ENCODE measurements at regions of chr6 and their contacts with region 1.

Region 1: GRCh38 chr6:31546962-31547726 is at the start of gene NFKBIL1:
- DNase-seq: peak; percentile 94 to 98 (median 98)
- ATAC-seq: peak; percentile 96 to 98 (median 97)
- H3K4me3 ChIP-seq: peak within 1 kb of the TSS; percentile 4 to 64 (median 56)
- H3K27ac ChIP-seq: peak within 1 kb of the TSS; percentile 63 to 95 (median 89)
- H3K4me1 ChIP-seq: peaks cover 0 to 37% (median 22%) of the 10 kb centered on the region in 12 donors
- H3K27me3 ChIP-seq: no peaks in the 10 kb centered on the region
- CTCF ChIP-seq: peak in 2 of 12 donors; percentile 1 to 21
- POLR2A ChIP-seq: peak in 1 of 2 donors; percentile 62
- total RNA-seq, gene NFKBIL1: 10.0 to 17.8 (median 12.4) TPM

Region 2: DNA sequence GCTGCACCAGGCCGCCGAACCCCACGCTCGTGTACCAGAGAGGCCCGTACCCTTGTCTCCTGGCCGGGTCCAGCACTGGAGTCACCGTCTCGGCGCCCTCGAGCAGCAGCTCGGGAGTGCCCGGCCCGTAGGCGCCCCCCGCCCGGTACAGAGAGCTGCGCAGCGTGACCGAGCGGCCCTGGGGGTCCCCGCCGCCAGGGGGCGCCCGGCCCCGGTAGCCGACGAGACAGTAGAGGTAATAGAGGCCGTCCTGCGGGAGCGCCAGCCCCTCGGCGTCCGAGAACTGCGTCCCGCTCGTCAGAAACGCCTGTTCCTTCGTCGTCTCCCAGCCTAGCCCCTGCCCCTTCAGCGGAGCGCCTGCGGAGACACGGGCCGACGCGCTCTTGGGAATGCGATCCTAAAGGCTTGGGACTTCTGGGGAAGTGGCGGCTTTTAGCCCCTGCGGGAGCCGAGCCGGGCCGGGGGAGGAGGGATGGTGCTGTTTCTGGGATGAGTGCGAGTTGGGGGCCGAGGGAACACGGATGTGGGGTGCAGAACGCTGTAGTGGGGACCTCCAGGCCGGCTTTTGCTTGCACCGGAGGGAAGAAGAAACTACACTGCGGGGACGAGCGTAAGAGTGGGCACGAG is 33.8 kb after region 1 on chr6:
- intact Hi-C with region 1: loop called in 9 of 10 experiments (anchors 2 to 5 kb)
- DNase-seq: peak; percentile 90 to 95 (median 92)
- ATAC-seq: peak; percentile 93 to 98 (median 98)
- H3K4me3 ChIP-seq: peak overlapping the region; percentile 67 to 98 (median 84)
- H3K27ac ChIP-seq: peak overlapping the region; percentile 71 to 95 (median 85)
- H3K4me1 ChIP-seq: peaks cover 0 to 83% (median 15%) of the 10 kb centered on the region in 12 donors
- H3K27me3 ChIP-seq: no peaks in the 10 kb centered on the region
- CTCF ChIP-seq: peak; percentile 31 to 100 (median 99)
- POLR2A ChIP-seq: peak in 1 of 2 donors; percentile 39

Region 3: DNA sequence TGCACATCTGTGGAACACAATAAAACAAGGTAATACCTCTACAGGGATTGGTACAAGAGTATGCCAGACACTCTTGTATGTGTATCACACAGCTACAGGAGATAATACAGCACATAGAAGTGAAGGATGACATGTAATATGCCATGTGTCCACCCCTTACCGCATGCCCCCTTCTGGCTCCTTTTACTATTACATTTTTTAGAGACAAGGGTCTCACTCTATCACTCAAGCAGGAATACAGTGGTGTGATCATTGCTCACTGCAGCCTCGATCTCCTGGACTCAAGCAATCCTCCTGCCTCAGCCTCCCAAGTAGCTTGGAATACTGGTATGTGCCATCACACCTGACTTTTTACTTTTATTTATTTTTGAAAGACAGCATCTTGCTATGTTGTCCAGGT is 49.9 kb after region 1 on chr6:
- intact Hi-C with region 1: loop called (anchors 1 to 2 kb)
- DNase-seq: no peak
- ATAC-seq: peak in 3 of 4 donors; percentile 53 to 63 (median 57)
- H3K4me3 ChIP-seq: no peak overlapping the region
- H3K27ac ChIP-seq: no peak overlapping the region
- H3K4me1 ChIP-seq: peaks cover 0 to 13% (median 0%) of the 10 kb centered on the region in 12 donors
- H3K27me3 ChIP-seq: no peaks in the 10 kb centered on the region
- CTCF ChIP-seq: peak in 11 of 12 donors; percentile 15 to 50 (median 45)
- POLR2A ChIP-seq: no peak

Region 4: GRCh38 chr6:31659649-31660380 is 112.7 kb after region 1 on chr6:
- intact Hi-C with region 1: loop called in 2 of 10 experiments (anchors 2 to 5 kb)
- DNase-seq: no peak
- ATAC-seq: peak in 1 of 4 donors; percentile 5
- H3K4me3 ChIP-seq: peak overlapping the region; percentile 65 to 98 (median 83)
- H3K27ac ChIP-seq: peak overlapping the region; percentile 84 to 95 (median 93)
- H3K4me1 ChIP-seq: peaks cover 24 to 66% (median 49%) of the 10 kb centered on the region in 12 donors
- H3K27me3 ChIP-seq: no peaks in the 10 kb centered on the region
- CTCF ChIP-seq: no peak
- POLR2A ChIP-seq: no peak

Region 5: GRCh38 chr6:31665501-31666336 is 118.6 kb after region 1 on chr6 and contains the start of gene CSNK2B:
- intact Hi-C with region 1: loop called in 1 of 10 experiments (anchors 2 kb)
- DNase-seq: peak; percentile 99
- ATAC-seq: peak; percentile 90 to 94 (median 92)
- H3K4me3 ChIP-seq: peak within 1 kb of the TSS; percentile 64 to 95 (median 83)
- H3K27ac ChIP-seq: peak within 1 kb of the TSS; percentile 83 to 97 (median 95)
- H3K4me1 ChIP-seq: peaks cover 9 to 60% (median 38%) of the 10 kb centered on the region in 12 donors
- H3K27me3 ChIP-seq: no peaks in the 10 kb centered on the region
- CTCF ChIP-seq: peak in 4 of 12 donors; percentile 18 to 41 (median 34)
- POLR2A ChIP-seq: peak in 1 of 2 donors; percentile 56
- total RNA-seq, gene CSNK2B: 111 to 323 (median 116) TPM